ENCODE measurements at regions of chr17 and their contacts with region 1.

Region 1: DNA sequence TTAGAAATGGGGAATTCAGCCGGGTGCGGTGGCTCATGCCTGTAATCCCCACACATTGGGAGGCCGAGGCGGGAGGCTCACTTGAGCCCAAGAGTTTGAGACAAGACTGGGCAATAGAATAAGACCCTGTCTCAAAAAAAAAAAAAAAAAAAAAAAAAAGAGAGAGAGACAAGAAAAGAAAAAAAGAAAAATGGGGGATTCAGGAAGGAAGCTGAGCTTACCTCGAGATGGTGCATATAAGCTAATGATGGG is 150.8 kb upstream of the RPH3AL start:
- DNase-seq: no peak
- H3K4me3 ChIP-seq: peak overlapping the region in 1 of 3 experiments; percentile 47
- H3K4me3 Mint-ChIP-seq: peak overlapping the region; percentile 71 to 78
- H3K27ac ChIP-seq: no peak overlapping the region
- H3K27ac Mint-ChIP-seq: peak overlapping the region in 5 of 7 donors; percentile 63 to 96 (median 72)
- H3K4me1 ChIP-seq: peaks cover 29 to 30% of the 10 kb centered on the region in 2 donors
- H3K4me1 Mint-ChIP-seq: peaks cover 39% of the 10 kb centered on the region
- H3K27me3 ChIP-seq: no peaks in the 10 kb centered on the region
- H3K27me3 Mint-ChIP-seq: peaks cover 0 to 3% (median 2%) of the 10 kb centered on the region in 3 donors
- CTCF ChIP-seq: no peak

Region 2: GRCh38 chr17:520447-521182 is 17.2 kb after region 1 on chr17:
- intact Hi-C with region 1: loop called in 1 of 2 experiments (anchors 2 kb)
- DNase-seq: peak in 2 of 3 donors; percentile 24 to 54
- H3K4me3 ChIP-seq: no peak overlapping the region
- H3K4me3 Mint-ChIP-seq: peak overlapping the region in 1 of 2 donors; percentile 63
- H3K27ac ChIP-seq: peak overlapping the region in 1 of 2 donors; percentile 63
- H3K27ac Mint-ChIP-seq: peak overlapping the region in 6 of 7 donors; percentile 54 to 91 (median 86)
- H3K4me1 ChIP-seq: peaks cover 42 to 57% of the 10 kb centered on the region in 2 donors
- H3K4me1 Mint-ChIP-seq: peaks cover 45% of the 10 kb centered on the region
- H3K27me3 ChIP-seq: no peaks in the 10 kb centered on the region
- H3K27me3 Mint-ChIP-seq: no peaks in the 10 kb centered on the region
- CTCF ChIP-seq: no peak

Measured in CD14-positive monocyte (primary cell).